ENCODE measurements at regions of chr11 and their contacts with region 1.

Region 1: DNA sequence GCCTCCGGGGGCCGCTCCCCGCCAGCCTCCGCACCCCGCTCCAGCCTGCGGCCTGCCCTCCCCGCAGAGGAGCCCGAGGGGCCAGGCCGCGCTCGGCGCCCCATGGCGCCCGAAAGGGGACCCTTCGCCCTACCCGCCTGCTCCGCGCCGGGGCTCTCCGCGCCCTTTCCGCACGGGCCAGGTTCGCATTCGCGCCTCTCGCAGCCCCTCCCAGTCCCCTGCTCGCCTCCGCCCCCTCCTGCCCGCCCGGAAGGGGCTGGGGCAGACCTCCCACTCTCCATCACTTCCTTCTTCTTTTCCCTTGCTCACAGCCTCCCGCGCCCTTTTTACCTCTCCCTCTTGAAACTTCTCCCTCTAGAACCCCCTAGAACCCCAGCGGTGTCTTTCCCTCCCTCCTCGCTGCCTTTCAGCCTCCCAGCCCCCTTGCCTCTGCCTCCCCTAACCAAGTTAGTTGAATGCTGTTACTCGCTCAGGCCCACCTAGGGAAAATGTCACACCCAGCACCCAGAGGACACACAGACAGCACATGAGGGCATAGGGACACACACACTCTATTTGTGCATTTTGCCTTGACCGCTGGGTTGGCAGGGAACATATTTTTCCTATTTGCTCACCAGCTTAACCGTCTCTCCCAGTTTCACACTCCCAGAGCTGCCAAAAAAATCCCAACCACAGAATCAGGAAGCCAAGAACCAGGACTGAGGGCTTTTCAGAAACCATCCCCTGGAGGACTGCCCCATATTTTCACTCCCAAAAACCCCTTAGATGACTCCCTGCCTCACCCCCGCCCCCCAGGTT is at the start of gene SLC43A3:
- DNase-seq: peak; percentile 69
- H3K4me3 ChIP-seq: peak within 1 kb of the TSS; percentile 38 to 39
- H3K27ac ChIP-seq: peak within 1 kb of the TSS; percentile 75 to 87
- H3K4me1 ChIP-seq: no peaks in the 10 kb centered on the region
- H3K27me3 ChIP-seq: no peaks in the 10 kb centered on the region
- CTCF ChIP-seq: peak in 1 of 4 experiments; percentile 3
- POLR2A ChIP-seq: no peak
- total RNA-seq, gene SLC43A3: 23.3 to 39.8 TPM

Region 2: DNA sequence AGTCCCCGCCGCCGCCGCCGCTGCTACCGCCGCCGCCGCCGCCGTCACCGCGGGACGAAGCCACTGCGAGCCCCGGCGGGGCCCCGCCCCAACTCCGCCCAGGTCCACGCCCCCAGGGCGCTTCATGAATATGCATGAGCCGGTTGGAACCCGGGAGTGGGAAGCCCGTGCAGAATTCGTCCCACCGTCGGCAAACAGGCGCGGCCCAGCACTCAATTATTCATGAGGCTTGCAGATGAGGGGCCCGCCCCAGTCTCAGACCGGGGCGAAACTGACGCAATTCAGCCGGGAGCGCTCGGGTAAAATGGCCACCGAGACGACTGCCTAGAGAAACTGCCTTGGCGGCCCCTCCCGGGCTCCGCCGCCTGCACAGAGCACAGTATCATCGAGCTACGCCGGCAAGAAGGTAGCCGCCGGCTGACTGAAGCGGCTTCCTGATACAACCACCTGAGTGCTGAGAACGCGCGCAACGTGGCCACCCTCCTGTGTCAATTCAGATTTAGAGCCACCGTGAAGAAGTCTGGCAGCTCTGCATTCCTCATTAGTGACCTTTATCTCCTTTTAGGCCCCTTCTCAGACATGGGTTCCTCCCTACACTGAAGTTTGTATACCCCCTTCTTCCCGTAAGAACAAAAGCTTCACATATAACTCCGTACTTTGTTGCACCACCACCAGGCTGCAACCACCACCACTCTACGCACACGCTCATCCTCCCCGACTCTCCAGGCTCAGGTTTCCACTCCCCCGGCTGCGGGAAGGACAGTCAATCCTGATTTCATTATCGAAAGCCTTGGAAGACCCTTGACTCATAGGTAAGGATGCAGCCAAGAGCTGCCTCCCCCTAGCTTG is 102.0 kb before region 1 on chr11 and contains the start of gene TNKS1BP1:
- intact Hi-C with region 1: loop called (anchors 5 kb)
- DNase-seq: peak; percentile 99
- H3K4me3 ChIP-seq: peak within 1 kb of the TSS; percentile 81 to 94
- H3K27ac ChIP-seq: peak within 1 kb of the TSS; percentile 97 to 99
- H3K4me1 ChIP-seq: peaks cover 17% of the 10 kb centered on the region
- H3K27me3 ChIP-seq: no peaks in the 10 kb centered on the region
- CTCF ChIP-seq: peak in 1 of 4 experiments; percentile 12
- POLR2A ChIP-seq: peak; percentile 88
- total RNA-seq, gene TNKS1BP1: 140 to 158 TPM

Region 3: DNA sequence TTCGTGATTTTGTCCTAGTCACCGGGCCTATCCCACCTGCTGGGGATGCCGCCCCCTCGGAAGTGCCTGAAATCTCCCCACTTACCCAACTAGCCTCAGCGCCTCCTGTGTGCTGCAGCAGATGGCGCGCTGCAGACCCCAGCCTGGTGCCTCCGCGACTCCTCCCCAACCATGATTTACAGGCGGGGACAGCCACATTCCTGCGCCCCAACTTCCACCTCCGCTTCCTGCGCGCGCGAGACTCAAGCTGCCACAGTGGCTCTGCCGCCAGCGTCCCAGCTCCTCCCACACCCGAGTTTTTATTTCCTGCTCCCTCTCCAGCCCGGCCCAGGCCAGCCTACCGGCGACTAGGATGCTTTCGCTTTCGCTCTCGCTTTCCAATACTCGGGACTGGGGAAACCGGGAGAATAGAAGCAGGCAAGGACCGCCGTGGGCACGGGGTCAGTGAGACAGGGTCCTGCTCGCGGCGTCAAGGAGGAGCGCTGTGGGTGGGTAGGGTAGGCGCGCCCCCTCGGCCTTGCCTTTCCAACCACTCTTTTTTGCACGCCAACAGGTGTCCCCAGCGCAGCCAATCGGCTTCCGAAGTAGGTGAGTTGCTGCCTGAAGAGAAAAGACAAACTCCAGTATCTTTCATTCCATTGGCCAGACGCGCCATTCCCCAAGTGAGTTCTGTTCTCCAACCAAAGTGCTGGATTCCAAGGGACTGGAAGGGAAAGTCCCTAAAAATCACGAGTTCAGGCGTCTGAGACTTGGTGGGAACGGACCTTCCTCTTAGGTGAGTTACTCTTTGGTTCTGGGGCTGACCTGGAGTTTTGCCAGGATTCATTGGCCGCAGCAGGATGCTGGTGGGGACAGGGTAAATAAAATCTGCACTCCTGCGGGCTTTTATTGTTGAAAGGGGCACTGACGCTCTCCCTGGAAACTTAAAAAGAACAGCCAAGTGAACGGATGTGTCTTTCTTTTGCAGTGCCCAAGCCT is 1715.7 kb after region 1 on chr11 and contains the start of gene FAM111A:
- intact Hi-C with region 1: loop called (anchors 10 kb)
- DNase-seq: peak; percentile 90
- H3K4me3 ChIP-seq: peak within 1 kb of the TSS; percentile 64 to 77
- H3K27ac ChIP-seq: peak within 1 kb of the TSS; percentile 90 to 95
- H3K4me1 ChIP-seq: peaks cover 5% of the 10 kb centered on the region
- H3K27me3 ChIP-seq: no peaks in the 10 kb centered on the region
- CTCF ChIP-seq: peak in 2 of 4 experiments; percentile 10 to 13
- POLR2A ChIP-seq: peak; percentile 32
- total RNA-seq, gene FAM111A: 49.5 to 60.3 TPM